AG04450 (cell line): ENCODE measurements at regions of chr14 and their contacts with region 1.

Region 1: DNA sequence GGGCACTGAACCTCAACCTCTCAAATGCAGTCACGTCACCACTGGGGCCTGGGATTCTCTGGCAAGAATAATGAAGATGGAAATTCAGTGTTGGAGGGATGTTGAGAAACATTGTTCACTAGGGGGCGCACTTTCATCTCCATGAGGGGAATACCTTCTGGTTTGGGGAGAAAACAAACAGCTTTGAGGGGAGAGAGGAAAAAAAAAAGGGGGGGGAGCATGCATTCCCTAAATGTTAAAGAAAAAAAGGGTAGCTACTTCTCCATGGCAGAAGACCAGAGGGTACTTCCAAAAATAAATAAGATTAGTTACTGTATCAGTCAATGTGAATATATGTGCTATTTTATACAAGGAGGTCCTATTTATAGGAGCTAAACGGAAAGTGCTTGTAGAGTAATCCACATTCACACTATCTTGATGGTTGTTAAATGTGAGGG is 5.8 kb upstream of the TBPL2 start:
- DNase-seq: peak; percentile 42
- H3K4me3 ChIP-seq: no peak overlapping the region
- H3K27ac ChIP-seq: peak overlapping the region; percentile 55
- H3K27me3 ChIP-seq: no peaks in the 10 kb centered on the region
- CTCF ChIP-seq: peak; percentile 80

Region 2: DNA sequence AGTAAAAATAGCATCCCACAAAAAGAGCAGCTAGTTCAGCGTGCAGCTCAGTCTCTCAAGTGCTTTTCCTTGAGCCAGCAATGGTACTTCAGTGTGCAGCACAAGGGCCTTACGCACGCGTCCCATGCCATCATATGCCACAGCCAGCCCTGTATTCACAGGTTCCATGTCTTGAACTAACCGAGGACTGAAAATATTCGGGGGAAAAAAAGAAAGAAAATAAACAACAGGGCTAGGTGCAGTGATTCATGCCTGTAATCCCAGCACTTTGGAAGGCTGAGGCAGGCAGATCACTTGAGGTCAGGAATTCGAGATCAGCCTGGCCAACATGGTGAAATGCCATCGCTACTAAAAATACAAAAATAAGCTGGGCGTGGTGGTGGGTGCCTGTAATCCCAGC is 63.2 kb before region 1 on chr14:
- CTCF ChIA-PET with region 1: no interaction called
- POLR2A ChIA-PET with region 1: no interaction called
- DNase-seq: no peak
- H3K4me3 ChIP-seq: no peak overlapping the region
- H3K27ac ChIP-seq: no peak overlapping the region
- H3K27me3 ChIP-seq: no peaks in the 10 kb centered on the region
- CTCF ChIP-seq: no peak

Region 3: DNA sequence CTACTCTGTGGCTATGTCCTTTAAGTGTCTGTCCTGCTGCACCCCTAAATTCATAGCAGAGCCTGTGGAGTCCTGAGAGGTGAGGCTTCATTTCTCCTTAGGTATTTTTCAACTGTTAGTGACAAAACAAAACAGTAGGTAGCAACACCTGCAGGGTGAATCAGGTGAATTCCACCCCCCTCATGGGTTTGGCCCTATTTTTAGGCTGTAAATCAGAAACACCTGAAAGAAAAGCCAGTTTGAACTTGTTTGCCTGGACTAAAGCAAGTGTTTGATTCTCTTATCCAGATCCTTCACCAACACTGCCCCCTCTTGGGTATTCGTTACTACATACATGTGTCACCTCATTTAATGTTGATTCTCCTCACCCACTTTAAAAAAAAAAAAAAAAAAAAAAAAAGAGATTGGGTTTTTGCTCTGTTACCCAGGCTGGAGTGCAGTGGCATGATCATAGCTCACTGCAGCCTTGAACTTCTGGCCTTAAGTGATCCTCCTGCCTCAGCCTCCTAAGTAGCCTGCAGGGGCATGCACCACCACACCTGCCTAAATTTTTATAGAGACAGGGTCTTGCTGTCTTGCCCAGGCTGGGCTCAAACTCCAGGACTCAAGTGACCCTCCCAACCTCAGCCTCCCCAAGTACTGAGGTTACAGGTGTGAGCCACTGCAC is 16.1 kb before region 1 on chr14:
- CTCF ChIA-PET with region 1: interaction called, 68 read pairs
- POLR2A ChIA-PET with region 1: no interaction called
- DNase-seq: peak; percentile 67
- H3K4me3 ChIP-seq: no peak overlapping the region
- H3K27ac ChIP-seq: no peak overlapping the region
- H3K27me3 ChIP-seq: peaks cover 3% of the 10 kb centered on the region
- CTCF ChIP-seq: peak; percentile 64

Region 4: DNA sequence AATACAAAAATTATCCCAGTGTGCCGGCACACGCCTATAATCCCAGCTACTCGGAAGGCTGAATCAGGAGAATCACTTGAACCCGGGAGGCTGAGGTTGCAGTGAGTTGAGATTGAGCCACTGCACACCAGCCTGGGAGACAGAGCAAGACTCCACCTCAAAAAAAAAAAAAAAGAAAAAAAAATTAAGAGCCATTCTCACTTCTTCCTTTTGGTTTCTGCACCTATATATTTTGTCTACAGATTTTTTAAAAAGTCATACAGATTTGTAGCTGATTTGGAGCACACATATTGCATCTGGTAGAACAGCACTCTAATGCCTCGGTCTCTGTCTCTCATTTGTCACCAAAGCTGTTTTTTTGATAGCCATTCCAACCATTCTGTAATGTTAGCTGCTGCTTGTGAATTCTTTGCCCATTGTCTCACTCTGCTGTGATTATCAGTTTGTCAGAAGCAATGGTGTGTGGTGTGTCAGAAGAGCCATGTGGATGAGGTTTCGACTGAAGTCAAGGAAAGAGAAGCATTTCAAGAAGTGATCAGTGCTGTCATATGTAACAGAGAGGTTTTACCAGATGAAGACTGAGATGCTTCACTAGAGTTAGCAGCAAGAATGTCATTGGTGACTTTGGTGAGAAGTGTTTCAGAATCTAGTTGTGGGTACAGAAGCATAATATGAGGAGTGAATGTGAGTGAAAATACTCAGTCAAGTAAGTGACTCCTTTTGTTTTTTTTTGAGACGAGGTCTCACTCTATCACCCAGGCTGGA is 125.1 kb after region 1 on chr14:
- CTCF ChIA-PET with region 1: interaction called, 13 read pairs
- POLR2A ChIA-PET with region 1: no interaction called
- DNase-seq: no peak
- H3K4me3 ChIP-seq: no peak overlapping the region
- H3K27ac ChIP-seq: no peak overlapping the region
- H3K27me3 ChIP-seq: no peaks in the 10 kb centered on the region
- CTCF ChIP-seq: no peak

Region 5: GRCh38 chr14:55593698-55594097 is 147.5 kb after region 1 on chr14:
- CTCF ChIA-PET with region 1: interaction called, 12 read pairs
- POLR2A ChIA-PET with region 1: no interaction called
- DNase-seq: no peak
- H3K4me3 ChIP-seq: no peak overlapping the region
- H3K27ac ChIP-seq: no peak overlapping the region
- H3K27me3 ChIP-seq: no peaks in the 10 kb centered on the region
- CTCF ChIP-seq: no peak

Region 6: GRCh38 chr14:55624913-55625312 is 178.7 kb after region 1 on chr14:
- CTCF ChIA-PET with region 1: interaction called, 15 read pairs
- POLR2A ChIA-PET with region 1: no interaction called
- DNase-seq: no peak
- H3K4me3 ChIP-seq: no peak overlapping the region
- H3K27ac ChIP-seq: no peak overlapping the region
- H3K27me3 ChIP-seq: no peaks in the 10 kb centered on the region
- CTCF ChIP-seq: no peak

Region 7: GRCh38 chr14:55665067-55665675 is 218.9 kb after region 1 on chr14:
- CTCF ChIA-PET with region 1: interaction called, 12 read pairs
- POLR2A ChIA-PET with region 1: no interaction called
- DNase-seq: no peak
- H3K4me3 ChIP-seq: no peak overlapping the region
- H3K27ac ChIP-seq: no peak overlapping the region
- H3K27me3 ChIP-seq: no peaks in the 10 kb centered on the region
- CTCF ChIP-seq: no peak